AG04450 (cell line): ENCODE measurements at regions of chr11 and their contacts with region 1.

Region 1: GRCh38 chr11:75204685-75205563 is 35.6 kb upstream of the TPBGL start:
- DNase-seq: peak; percentile 53
- H3K4me3 ChIP-seq: no peak overlapping the region
- H3K27ac ChIP-seq: no peak overlapping the region
- H3K27me3 ChIP-seq: peaks cover 41% of the 10 kb centered on the region
- CTCF ChIP-seq: peak; percentile 95

Region 2: GRCh38 chr11:74366576-74366975 is 838.3 kb before region 1 on chr11:
- CTCF ChIA-PET with region 1: no interaction called
- POLR2A ChIA-PET with region 1: no interaction called
- DNase-seq: no peak
- H3K4me3 ChIP-seq: no peak overlapping the region
- H3K27ac ChIP-seq: no peak overlapping the region
- H3K27me3 ChIP-seq: no peaks in the 10 kb centered on the region
- CTCF ChIP-seq: no peak

Region 3: GRCh38 chr11:75022759-75023396 is 182.0 kb before region 1 on chr11:
- CTCF ChIA-PET with region 1: interaction called, 132 read pairs
- POLR2A ChIA-PET with region 1: no interaction called
- DNase-seq: peak; percentile 72
- H3K4me3 ChIP-seq: no peak overlapping the region
- H3K27ac ChIP-seq: no peak overlapping the region
- H3K27me3 ChIP-seq: peaks cover 3% of the 10 kb centered on the region
- CTCF ChIP-seq: peak; percentile 99

Region 4: GRCh38 chr11:75233742-75234172 is 28.8 kb after region 1 on chr11:
- CTCF ChIA-PET with region 1: interaction called, 13 read pairs
- POLR2A ChIA-PET with region 1: no interaction called
- DNase-seq: peak; percentile 16
- H3K4me3 ChIP-seq: no peak overlapping the region
- H3K27ac ChIP-seq: peak overlapping the region; percentile 21
- H3K27me3 ChIP-seq: peaks cover 19% of the 10 kb centered on the region
- CTCF ChIP-seq: no peak